ENCODE measurements at regions of chr21 and their contacts with region 1.

Region 1: GRCh38 chr21:45140346-45140940 is 66.1 kb downstream of the ADARB1 start:
- DNase-seq: peak; percentile 91
- ATAC-seq: peak; percentile 92
- H3K4me3 ChIP-seq: no peak overlapping the region
- H3K27ac ChIP-seq: no peak overlapping the region
- H3K4me1 ChIP-seq: peaks cover 16% of the 10 kb centered on the region
- H3K27me3 ChIP-seq: no peaks in the 10 kb centered on the region
- CTCF ChIP-seq: peak; percentile 96

Region 2: GRCh38 chr21:44949779-44950198 is 190.7 kb before region 1 on chr21:
- CTCF ChIA-PET with region 1: interaction called, 14 read pairs
- POLR2A ChIA-PET with region 1: no interaction called
- intact Hi-C with region 1: loop called (anchors 1 kb)
- DNase-seq: peak; percentile 81
- ATAC-seq: peak; percentile 84
- H3K4me3 ChIP-seq: no peak overlapping the region
- H3K27ac ChIP-seq: no peak overlapping the region
- H3K4me1 ChIP-seq: peaks cover 13% of the 10 kb centered on the region; the same call in 1 of the 2 replicates
- H3K27me3 ChIP-seq: no peaks in the 10 kb centered on the region
- CTCF ChIP-seq: peak; percentile 96

Region 3: DNA sequence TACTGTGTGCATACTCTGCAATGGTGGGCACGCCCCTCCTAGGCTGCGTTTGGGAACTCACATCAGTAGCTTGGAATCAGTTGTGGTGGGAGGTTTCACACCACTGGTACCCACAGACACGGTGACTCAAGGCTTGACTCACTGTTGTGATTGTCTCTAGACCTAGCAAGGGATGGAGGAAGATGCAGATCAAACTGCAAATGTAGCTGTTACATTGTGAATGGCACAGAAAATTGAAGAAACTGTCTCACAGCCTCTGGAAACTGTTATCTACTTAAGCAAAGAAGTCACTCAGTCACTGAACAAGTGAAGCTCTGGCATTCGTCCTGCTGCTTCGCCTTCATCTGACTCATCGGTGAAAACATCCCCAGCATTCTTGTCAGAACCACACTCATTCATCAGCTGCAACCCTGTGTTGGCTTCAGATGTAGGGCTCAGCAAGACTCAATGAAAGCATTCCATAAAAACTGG is 87.8 kb after region 1 on chr21:
- CTCF ChIA-PET with region 1: interaction called, 5 read pairs
- POLR2A ChIA-PET with region 1: no interaction called
- intact Hi-C with region 1: loop called (anchors 5 kb)
- DNase-seq: peak; percentile 95
- ATAC-seq: peak; percentile 88
- H3K4me3 ChIP-seq: no peak overlapping the region; the same call in 1 of the 2 replicates
- H3K27ac ChIP-seq: peak overlapping the region; percentile 29
- H3K4me1 ChIP-seq: peaks cover 29% of the 10 kb centered on the region
- H3K27me3 ChIP-seq: no peaks in the 10 kb centered on the region
- CTCF ChIP-seq: no peak

Region 4: GRCh38 chr21:45270306-45270821 is 129.9 kb after region 1 on chr21:
- CTCF ChIA-PET with region 1: interaction called, 6 read pairs
- POLR2A ChIA-PET with region 1: interaction called, 3 read pairs
- intact Hi-C with region 1: loop called (anchors 2 kb)
- DNase-seq: peak; percentile 48
- ATAC-seq: peak; percentile 55; the same call in 1 of the 2 replicates
- H3K4me3 ChIP-seq: no peak overlapping the region
- H3K27ac ChIP-seq: no peak overlapping the region
- H3K4me1 ChIP-seq: no peaks in the 10 kb centered on the region
- H3K27me3 ChIP-seq: no peaks in the 10 kb centered on the region
- CTCF ChIP-seq: peak; percentile 70

Region 5: DNA sequence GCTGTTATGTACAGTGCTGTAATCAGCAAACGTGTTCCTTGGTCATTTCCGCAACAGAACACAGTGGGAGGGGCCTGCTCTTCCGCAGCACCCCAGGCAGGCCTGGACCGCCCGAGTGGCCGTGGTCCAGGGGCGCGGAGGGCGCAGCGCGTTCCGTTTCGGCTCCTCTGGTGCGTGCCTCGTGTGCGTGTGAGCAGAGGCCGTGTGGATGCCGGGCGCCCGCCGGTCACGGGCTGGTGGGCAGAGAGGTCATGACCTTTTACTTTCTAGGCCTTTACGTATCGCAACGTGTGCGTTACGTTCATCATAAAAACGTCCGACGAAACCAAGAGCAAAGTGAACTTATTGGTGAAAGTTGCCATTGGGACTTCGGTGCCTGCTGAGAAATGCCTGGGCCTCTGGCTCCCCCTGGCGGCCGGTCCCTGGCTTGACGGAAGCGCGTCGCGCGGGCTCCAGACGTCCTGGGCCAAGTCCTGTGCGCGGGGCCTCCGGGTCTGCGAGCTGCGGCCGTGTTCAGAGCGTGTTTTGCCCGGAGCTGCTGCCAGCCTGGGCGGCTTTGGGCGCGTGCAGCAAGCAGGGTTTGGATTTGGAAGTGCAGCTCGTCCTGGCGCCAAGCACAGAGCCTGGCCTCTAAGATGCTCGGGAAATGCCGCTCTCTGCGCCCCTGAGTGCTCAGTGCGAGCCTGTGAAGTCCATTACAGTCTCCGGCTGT is 298.9 kb after region 1 on chr21:
- CTCF ChIA-PET with region 1: no interaction called
- POLR2A ChIA-PET with region 1: no interaction called
- intact Hi-C with region 1: loop called (anchors 2 kb)
- DNase-seq: peak; percentile 90
- ATAC-seq: peak; percentile 89
- H3K4me3 ChIP-seq: peak overlapping the region; percentile 58
- H3K27ac ChIP-seq: peak overlapping the region; percentile 44
- H3K4me1 ChIP-seq: peaks cover 6% of the 10 kb centered on the region; the same call in 1 of the 2 replicates
- H3K27me3 ChIP-seq: no peaks in the 10 kb centered on the region
- CTCF ChIP-seq: peak; percentile 94

Region 6: GRCh38 chr21:45478115-45478801 is 337.8 kb after region 1 on chr21:
- CTCF ChIA-PET with region 1: no interaction called
- POLR2A ChIA-PET with region 1: no interaction called
- intact Hi-C with region 1: no loop called
- DNase-seq: peak; percentile 57
- ATAC-seq: peak; percentile 89
- H3K4me3 ChIP-seq: no peak overlapping the region
- H3K27ac ChIP-seq: no peak overlapping the region
- H3K4me1 ChIP-seq: no peaks in the 10 kb centered on the region
- H3K27me3 ChIP-seq: no peaks in the 10 kb centered on the region
- CTCF ChIP-seq: peak; percentile 76

Measured in PC-3 (cell line).